ENCODE measurements at regions of chr4 and their contacts with region 1.

Region 1: GRCh38 chr4:110211007-110211769 is 12.8 kb upstream of the ELOVL6 start:
- DNase-seq: no peak
- H3K4me3 ChIP-seq: no peak overlapping the region
- H3K27ac ChIP-seq: no peak overlapping the region
- H3K4me1 ChIP-seq: peaks cover 0 to 3% (median 0%) of the 10 kb centered on the region in 4 experiments; a peak in 1 of 7 replicates
- H3K27me3 ChIP-seq: no peaks in the 10 kb centered on the region
- CTCF ChIP-seq: peak in 2 of 3 experiments; percentile 42 to 60; a peak in 2 of 4 replicates
- EP300 ChIP-seq: no peak
- POLR2A ChIP-seq: no peak
- RAD21 ChIP-seq: peak; percentile 48 to 52

Region 2: DNA sequence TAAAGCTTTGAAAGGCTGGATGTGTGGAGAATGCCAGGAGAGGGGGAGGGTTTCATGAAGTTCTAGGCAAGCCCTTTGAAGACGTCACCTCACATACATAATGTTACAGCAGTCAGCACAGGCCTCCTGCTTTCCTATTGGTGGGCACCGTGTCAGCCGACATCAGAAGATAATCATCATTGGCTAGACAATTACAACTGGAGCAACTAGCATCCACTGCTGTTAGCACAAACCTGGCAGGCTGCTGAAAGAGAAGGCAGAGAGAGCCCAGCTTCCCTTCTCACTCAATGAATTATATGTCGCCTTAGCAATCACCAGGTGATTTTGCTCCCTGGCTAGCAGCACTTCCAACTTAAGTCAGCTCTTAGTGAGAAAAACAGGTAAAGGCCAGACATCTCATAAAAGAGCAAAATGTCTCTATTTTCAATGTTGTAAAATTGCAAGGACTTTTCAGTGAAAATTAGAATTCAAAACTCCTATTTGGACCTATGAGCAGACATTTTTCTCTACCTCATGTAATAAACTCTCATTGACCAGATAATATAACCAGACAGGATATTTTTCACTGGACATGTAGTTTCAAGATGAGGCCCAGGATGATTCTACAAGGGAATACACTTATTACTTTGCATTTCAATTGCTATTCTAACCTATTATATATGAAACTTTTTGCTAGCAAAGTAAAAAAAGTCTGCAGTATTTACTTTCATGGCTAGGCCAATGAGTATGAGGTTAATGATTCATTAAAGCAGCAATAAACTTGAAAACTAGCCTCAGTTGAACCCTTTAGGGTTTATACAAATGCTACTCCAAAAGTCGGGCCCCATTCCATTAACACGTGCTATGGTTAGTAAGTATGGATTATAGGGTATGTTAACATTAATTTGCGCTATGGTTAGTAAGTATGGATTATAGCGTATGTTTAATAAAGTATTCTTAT is 17.1 kb before region 1 on chr4:
- CTCF ChIA-PET with region 1: interaction called, 7 read pairs
- POLR2A ChIA-PET with region 1: interaction called, 16 read pairs
- DNase-seq: peak; percentile 60 to 64
- H3K4me3 ChIP-seq: no peak overlapping the region
- H3K27ac ChIP-seq: no peak overlapping the region; the same call in 1 of the 2 replicates
- H3K4me1 ChIP-seq: peaks cover 4 to 15% (median 10%) of the 10 kb centered on the region in 4 experiments; a peak in 5 of 7 replicates
- H3K27me3 ChIP-seq: no peaks in the 10 kb centered on the region
- CTCF ChIP-seq: no peak
- EP300 ChIP-seq: no peak
- POLR2A ChIP-seq: peak; percentile 78 to 94
- RAD21 ChIP-seq: no peak